ENCODE measurements at regions of chr10 and their contacts with region 1.

Region 1: GRCh38 chr10:124827474-124827873 is 25.9 kb downstream of the ABRAXAS2 start:
- DNase-seq: no peak
- ATAC-seq: no peak
- H3K4me3 ChIP-seq: no peak overlapping the region
- H3K27ac ChIP-seq: no peak overlapping the region
- H3K4me1 ChIP-seq: no peaks in the 10 kb centered on the region
- H3K27me3 ChIP-seq: no peaks in the 10 kb centered on the region
- CTCF ChIP-seq: peak; percentile 42 to 71 (median 54)
- POLR2A ChIP-seq: no peak

Region 2: DNA sequence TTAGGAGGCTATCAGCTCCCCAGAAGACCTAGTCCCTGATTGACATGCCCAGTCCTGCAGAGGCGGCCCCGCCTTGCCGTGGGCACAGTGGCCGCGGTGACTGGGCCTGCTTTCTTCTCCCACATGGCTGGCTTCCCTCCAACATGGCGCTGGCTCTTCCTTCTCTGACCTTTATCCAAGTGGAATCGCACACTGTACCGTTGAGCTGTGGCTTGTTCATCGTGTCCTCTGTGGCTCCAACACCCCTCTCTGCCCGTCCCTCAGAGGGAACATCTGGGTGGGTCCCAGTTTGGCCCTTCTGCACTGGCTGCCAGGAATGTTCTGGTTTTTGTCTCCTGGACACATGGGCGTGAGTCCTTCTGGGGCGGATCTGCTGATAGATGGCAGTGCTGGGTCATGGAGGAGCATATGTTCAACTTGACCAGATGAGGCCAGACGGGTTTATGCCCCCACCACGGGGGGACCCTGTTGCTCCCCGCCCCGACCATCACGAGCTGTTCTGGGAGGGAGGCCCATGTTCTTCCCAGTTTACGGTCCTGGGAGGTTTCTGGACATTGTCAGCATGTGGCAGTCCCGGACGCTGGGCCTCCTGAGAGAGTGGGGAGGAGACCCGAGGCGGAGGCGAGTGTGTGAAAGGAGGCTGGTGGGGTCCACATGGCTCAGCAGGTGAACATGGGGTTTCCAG is 302.4 kb before region 1 on chr10:
- intact Hi-C with region 1: loop called in 9 of 10 experiments (anchors 2 to 5 kb)
- DNase-seq: peak; percentile 67 to 88 (median 81)
- ATAC-seq: peak; percentile 81 to 91 (median 88)
- H3K4me3 ChIP-seq: no peak overlapping the region
- H3K27ac ChIP-seq: peak overlapping the region; percentile 16 to 85 (median 64)
- H3K4me1 ChIP-seq: peaks cover 0 to 37% (median 12%) of the 10 kb centered on the region in 12 donors
- H3K27me3 ChIP-seq: no peaks in the 10 kb centered on the region
- CTCF ChIP-seq: no peak
- POLR2A ChIP-seq: no peak

Region 3: DNA sequence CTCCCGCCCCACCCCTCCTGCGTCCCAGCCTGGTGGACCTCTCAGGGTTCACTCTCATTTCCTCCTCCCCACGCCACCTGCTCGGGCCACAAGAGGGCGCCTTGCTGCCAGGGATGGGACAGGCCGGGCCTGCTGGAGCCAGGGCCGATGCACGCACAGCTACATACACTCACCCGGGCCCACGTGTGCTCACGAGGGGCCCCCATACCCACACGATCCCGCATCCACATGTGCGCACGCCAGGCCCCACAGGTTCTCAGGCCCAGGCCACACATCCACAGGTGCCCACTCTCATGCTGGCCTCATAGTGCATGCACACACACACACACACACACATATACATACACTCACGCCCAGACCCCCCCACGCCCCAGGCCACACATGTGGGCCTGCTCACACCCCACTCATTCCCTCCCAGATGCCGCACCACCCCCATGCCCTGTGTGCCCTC is 297.2 kb before region 1 on chr10:
- intact Hi-C with region 1: loop called (anchors 2 to 5 kb)
- DNase-seq: peak; percentile 84 to 94 (median 88)
- ATAC-seq: peak; percentile 68 to 87 (median 84)
- H3K4me3 ChIP-seq: no peak overlapping the region
- H3K27ac ChIP-seq: no peak overlapping the region
- H3K4me1 ChIP-seq: peaks cover 0 to 18% (median 5%) of the 10 kb centered on the region in 12 donors
- H3K27me3 ChIP-seq: no peaks in the 10 kb centered on the region
- CTCF ChIP-seq: peak; percentile 82 to 91 (median 87)
- POLR2A ChIP-seq: no peak

Region 4: DNA sequence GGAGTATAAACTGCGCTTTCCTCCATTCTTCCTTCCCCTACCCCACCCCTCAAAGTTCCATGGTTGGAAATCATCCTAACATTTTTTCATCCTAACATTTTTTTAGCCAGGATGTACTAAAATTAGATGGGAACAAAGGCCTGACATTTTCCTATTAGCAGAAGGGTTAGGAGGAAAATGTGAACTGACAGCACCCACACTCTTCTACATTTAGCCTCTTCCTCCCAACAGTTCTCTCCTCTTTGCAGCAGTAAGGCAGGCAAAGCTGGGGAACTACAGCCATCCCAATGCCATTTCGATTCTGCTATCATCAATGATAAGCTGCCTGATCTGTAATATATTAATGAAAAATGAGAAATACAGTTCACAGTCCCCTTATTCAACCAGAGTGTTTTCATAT is 71.9 kb before region 1 on chr10:
- intact Hi-C with region 1: loop called in 1 of 10 experiments (anchors 10 kb)
- DNase-seq: no peak
- ATAC-seq: peak in 2 of 4 donors; percentile 49 to 50
- H3K4me3 ChIP-seq: no peak overlapping the region
- H3K27ac ChIP-seq: peak overlapping the region in 7 of 12 donors; percentile 2 to 71 (median 19)
- H3K4me1 ChIP-seq: peaks cover 0 to 36% (median 18%) of the 10 kb centered on the region in 12 donors
- H3K27me3 ChIP-seq: no peaks in the 10 kb centered on the region
- CTCF ChIP-seq: no peak
- POLR2A ChIP-seq: no peak

Measured in heart left ventricle (tissue), 16 donors.